Heart right ventricle (tissue), 16 donors: ENCODE measurements at regions of chrX and their contacts with region 1.

Region 1: GRCh38 chrX:39896951-39897740 is 200.6 kb downstream of the BCOR start:
- DNase-seq: peak; percentile 20 to 33
- ATAC-seq: peak; percentile 46 to 77 (median 65)
- H3K4me3 ChIP-seq: no peak overlapping the region
- H3K27ac ChIP-seq: peak overlapping the region in 8 of 10 donors; percentile 1 to 64 (median 37)
- H3K4me1 ChIP-seq: peaks cover 3 to 41% (median 17%) of the 10 kb centered on the region in 9 donors
- H3K27me3 ChIP-seq: peaks cover 0 to 33% (median 0%) of the 10 kb centered on the region in 7 donors
- CTCF ChIP-seq: peak in 4 of 9 donors; percentile 12 to 31 (median 20)

Region 2: GRCh38 chrX:39633293-39633692 is 263.9 kb before region 1 on chrX:
- intact Hi-C with region 1: no loop called
- DNase-seq: no peak
- ATAC-seq: no peak
- H3K4me3 ChIP-seq: no peak overlapping the region
- H3K27ac ChIP-seq: no peak overlapping the region
- H3K4me1 ChIP-seq: no peaks in the 10 kb centered on the region
- H3K27me3 ChIP-seq: peaks cover 0 to 18% (median 0%) of the 10 kb centered on the region in 7 donors
- CTCF ChIP-seq: no peak

Region 3: DNA sequence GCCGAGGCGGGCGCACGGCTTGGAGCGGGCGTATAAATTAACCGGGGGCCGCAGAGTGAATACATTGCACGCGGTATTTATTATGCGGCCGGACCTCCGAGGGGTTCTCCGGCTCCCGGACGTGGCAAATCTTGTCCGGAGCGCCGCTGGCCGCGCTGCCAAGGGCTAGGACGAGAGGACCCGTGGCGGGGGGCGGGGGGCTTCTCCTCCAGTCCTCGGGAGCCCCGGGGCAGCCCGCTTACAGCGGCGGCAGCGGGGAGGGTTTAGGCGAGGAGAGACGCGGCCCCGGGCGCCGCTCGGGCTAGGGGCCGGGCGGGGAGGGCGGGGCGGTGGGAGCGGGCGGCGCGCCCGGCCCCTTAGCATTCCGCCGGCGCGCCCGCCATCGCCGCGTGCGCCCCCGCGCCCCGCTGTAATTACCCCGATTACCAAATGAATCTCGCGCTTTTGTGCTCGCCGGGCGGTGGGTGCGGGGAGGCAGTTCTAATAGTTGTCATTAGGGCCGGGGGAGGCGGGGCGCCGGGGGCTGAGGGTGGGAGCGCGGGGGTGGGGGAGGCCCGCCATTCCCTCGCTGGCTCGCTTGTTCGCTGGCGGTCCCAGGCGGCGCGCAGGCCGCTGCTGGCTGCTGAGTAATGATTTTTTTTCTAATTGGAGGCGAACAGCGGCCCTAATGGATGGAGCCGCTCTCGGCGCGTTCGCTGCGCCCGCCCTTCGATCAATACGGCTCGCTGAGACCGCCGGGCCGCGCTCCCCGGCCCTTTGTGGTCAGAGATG is 76.0 kb before region 1 on chrX:
- intact Hi-C with region 1: loop called in 2 of 10 experiments (anchors 10 kb)
- DNase-seq: peak in 1 of 2 donors; percentile 19
- ATAC-seq: peak in 7 of 8 donors; percentile 40 to 83 (median 43)
- H3K4me3 ChIP-seq: peak overlapping the region; percentile 3 to 54 (median 44)
- H3K27ac ChIP-seq: peak overlapping the region in 2 of 10 donors; percentile 25 to 40
- H3K4me1 ChIP-seq: peaks cover 0 to 15% (median 9%) of the 10 kb centered on the region in 9 donors
- H3K27me3 ChIP-seq: peaks cover 0 to 84% (median 0%) of the 10 kb centered on the region in 7 donors
- CTCF ChIP-seq: peak in 1 of 9 donors; percentile 8

Region 4: DNA sequence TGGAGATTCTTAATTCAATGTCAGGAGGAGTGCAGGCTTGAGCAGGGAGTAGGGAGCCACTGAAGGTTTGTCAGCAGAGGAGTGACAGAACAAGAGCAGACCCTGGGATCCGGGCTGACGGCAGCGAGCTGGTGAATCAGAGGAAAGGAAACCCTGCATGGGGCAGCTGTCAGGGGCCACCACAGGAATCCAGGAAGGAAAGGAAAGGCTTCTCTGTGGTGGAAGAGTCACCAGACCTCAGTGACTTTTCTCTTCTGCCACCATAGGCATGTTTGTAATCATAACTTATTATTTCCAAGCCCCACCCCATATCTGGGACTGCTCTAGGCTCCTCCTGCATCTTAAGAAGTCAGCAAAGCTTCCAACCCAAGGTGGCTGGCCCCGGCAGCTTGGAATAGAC is 49.7 kb after region 1 on chrX:
- intact Hi-C with region 1: no loop called
- DNase-seq: no peak
- ATAC-seq: no peak
- H3K4me3 ChIP-seq: no peak overlapping the region
- H3K27ac ChIP-seq: no peak overlapping the region
- H3K4me1 ChIP-seq: no peaks in the 10 kb centered on the region
- H3K27me3 ChIP-seq: no peaks in the 10 kb centered on the region
- CTCF ChIP-seq: no peak

Region 5: DNA sequence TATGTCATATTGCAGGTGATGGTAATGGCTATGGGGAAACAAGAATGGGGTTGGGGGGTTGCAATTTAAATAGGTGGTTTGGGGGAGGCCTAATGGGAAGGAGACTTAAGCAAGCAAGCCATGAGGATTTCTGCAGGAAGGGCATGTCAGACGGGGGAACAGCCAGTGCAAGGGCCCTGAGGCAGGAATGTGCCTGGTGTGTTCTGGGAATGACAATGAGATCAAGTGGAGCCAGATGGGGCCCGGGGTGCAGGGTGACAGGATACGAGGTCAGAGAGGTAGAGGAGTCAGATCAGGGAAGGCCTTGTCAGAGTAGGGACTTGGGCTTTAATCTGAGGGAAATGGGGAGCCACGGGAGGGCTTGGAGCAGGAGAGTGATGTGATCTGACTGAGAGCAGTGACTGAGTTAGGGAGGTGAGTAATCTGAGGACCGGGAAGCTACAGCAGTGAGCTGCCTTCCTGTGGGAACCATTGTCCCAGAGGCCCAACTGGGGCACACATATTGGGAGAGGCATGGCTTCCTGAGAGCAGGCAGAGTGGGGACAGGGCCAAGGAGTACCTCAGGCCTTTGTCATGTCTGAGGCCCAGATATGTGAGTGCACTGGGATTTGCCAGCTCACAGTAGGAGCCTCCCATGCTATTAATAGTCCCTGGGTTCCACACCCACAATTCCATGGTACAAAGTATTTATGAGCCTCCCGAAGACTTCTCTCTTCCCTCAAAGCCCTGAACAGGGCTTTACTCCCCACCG is 60.8 kb after region 1 on chrX:
- intact Hi-C with region 1: no loop called
- DNase-seq: peak in 1 of 2 donors; percentile 12
- ATAC-seq: peak; percentile 24 to 92 (median 78)
- H3K4me3 ChIP-seq: no peak overlapping the region
- H3K27ac ChIP-seq: peak overlapping the region in 3 of 10 donors; percentile 14 to 25 (median 22)
- H3K4me1 ChIP-seq: peaks cover 0 to 22% (median 5%) of the 10 kb centered on the region in 9 donors
- H3K27me3 ChIP-seq: peaks cover 0 to 7% (median 0%) of the 10 kb centered on the region in 7 donors
- CTCF ChIP-seq: no peak